Panc1 (cell line): ENCODE measurements at regions of chr11 and their contacts with region 1.

Region 1: DNA sequence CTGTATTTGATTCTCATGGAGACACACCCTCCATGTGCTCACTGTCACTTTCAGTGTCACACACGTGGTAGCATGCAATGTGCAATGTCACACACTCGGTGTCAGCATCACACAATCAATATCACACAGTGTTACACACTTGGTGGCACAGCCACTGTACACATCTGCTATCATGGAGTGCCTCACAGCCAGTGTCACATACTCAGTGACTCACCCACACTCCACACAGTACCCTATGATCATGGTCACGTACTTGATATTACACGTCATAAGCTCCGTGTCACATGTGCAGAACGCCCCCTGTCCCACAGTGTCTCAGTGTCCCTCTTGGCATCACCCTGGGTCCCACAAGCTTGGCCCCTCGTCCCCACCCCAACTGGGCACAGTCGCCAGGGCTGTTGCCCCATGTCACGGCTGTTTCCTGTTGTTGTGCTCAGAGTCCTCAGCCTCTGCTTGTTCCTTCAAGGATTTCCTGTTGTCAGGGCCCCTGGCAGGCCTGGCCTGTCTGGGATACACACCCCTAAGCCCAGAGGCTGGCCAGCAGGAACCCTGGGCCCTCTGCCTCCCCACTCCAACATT is 49.5 kb downstream of the PDE2A start:
- DNase-seq: no peak
- ATAC-seq: no peak
- H3K4me3 ChIP-seq: no peak overlapping the region
- H3K27ac ChIP-seq: no peak overlapping the region
- H3K4me1 ChIP-seq: no peaks in the 10 kb centered on the region
- H3K27me3 ChIP-seq: peaks cover 12% of the 10 kb centered on the region; the same call in 1 of the 2 replicates
- CTCF ChIP-seq: no peak

Region 2: DNA sequence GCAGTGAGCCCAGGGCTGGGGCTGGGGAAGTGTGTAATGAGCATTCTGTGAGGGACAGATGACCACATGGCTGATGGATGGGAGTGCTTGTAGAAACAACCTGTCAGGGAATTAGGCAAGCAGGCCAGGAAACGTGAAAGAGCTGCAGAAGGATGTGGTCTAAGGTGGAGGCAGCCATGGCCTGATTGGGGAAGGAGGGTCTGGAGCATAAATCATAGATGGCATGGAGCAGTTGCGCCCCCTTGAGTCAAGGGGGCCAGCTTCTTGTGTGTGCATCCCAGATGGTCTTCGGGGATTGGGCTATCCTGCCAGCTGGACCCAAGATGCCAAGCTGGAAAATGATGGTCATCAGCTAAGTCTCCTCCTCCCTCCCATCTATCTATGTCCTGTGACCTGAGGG is 71.0 kb before region 1 on chr11:
- CTCF ChIA-PET with region 1: no interaction called
- POLR2A ChIA-PET with region 1: no interaction called
- in situ Hi-C with region 1: loop called (anchors 5 kb)
- intact Hi-C with region 1: no loop called
- DNase-seq: no peak
- ATAC-seq: no peak
- H3K4me3 ChIP-seq: no peak overlapping the region
- H3K27ac ChIP-seq: no peak overlapping the region
- H3K4me1 ChIP-seq: no peaks in the 10 kb centered on the region
- H3K27me3 ChIP-seq: peaks cover 21% of the 10 kb centered on the region
- CTCF ChIP-seq: no peak; the same call in 1 of the 2 replicates